ENCODE measurements at regions of chr2 and their contacts with region 1.

Region 1: DNA sequence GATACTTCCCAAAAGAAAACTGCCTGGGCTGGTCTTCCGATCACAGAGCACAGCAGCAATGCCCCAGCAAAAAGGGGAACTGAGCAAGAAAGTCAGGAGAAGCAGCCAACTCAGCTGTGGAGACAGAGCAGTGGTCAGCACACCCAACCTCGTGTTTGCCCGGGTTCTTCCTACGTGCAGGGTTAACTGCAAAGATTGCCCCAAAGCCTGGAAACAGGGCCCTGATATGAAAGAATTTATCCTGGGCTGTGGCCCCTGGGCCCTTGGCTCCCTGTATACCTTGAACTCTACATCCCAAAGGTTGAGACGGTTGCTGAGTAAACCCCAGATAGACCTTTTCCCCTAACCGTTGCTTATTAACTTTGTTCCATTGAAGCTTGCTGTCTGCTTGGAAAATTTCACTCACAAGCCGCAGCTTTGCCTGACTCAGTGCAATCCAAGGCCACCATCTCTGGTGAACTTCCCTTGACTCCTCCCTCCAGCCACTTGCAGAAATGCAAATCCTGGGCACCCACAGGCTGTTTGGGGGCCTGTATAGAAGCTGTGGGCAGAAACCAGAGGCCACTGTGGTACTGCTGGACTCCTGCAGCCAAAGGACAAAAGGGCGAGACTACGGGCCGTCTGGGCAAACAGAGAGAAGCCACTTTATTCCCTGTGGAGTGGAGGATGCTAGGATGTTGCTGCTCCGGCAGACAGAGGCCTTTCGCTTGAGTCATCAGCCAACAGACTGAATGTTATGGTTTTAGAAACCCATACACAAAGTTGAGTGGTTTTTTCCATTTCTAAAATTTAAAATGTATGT is 18.2 kb downstream of the NRP2 start:
- DNase-seq: peak; percentile 84
- H3K4me3 ChIP-seq: no peak overlapping the region
- CTCF ChIP-seq: no peak

Region 2: DNA sequence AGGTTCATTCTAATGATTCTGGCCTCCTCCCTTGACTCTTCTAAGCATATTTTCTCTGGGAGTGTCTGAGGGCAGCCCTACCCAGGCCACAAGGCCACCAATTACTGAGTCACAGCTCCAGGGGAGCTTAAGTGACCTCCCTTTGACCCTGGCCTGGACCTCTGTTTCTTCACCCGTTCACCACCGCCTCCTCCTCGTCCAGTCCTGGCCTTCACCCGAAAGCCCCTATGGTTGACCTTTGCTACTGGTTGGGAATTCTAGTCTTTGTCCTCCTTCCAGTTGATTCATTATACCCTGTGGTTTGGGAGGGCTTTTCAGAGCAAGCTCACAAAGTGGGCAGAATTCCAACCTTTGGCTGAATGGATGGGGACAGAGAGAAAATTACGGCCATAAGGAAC is 54.4 kb after region 1 on chr2:
- in situ Hi-C with region 1: loop called (anchors 5 kb)
- DNase-seq: peak; percentile 39
- H3K4me3 ChIP-seq: no peak overlapping the region
- CTCF ChIP-seq: no peak